CD14-positive monocyte (primary cell): ENCODE measurements at regions of chr13 and their contacts with region 1.

Region 1: DNA sequence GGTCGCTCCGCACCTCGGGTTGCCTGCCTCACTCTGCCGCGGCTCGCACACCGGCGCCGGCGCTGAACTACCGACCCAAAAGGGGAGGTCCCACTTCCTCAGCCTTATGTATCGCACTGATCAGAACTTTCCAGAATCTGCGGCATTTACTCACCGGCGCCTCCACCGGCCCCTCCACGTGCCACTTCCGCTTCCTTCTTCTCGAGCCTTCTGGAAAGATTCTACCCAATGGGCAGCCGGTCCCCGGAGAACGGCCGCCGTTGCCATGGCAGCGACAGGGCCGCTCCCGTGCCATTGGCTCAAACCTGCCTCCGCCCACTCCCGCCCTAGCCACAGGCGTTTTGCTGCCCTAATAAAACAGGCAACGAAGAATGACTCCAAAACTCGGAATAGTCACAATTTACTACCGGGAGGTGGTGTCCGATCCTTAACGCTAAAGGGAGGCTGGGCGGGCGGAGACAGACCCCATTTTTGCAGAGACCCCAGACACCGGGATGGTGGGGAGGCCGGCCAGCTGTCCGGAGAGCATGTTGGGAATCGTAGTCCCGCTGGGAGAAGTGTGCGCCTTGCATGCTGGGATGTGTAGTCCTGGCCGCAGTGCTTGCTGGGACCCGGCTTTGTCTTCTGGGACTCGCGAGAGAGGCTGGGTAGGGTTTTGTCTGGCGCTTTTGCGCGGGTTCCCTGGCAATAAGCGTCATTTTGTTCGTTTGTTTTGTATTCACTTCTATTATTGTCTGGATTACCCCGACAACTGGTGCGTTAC is at the start of gene HSPH1:
- DNase-seq: peak; percentile 97 to 99 (median 98)
- H3K4me3 ChIP-seq: peak within 1 kb of the TSS; percentile 72 to 98 (median 90)
- H3K4me3 Mint-ChIP-seq: peak within 1 kb of the TSS; percentile 96 to 97
- H3K27ac ChIP-seq: peak within 1 kb of the TSS; percentile 85 to 92
- H3K27ac Mint-ChIP-seq: peak within 1 kb of the TSS; percentile 81 to 94 (median 92)
- H3K4me1 ChIP-seq: peaks cover 15 to 30% of the 10 kb centered on the region in 2 donors
- H3K4me1 Mint-ChIP-seq: peaks cover 24% of the 10 kb centered on the region
- H3K27me3 ChIP-seq: no peaks in the 10 kb centered on the region
- H3K27me3 Mint-ChIP-seq: peaks cover 0 to 5% (median 0%) of the 10 kb centered on the region in 3 donors
- CTCF ChIP-seq: no peak
- polyA plus RNA-seq, gene HSPH1: 7.4 to 11.3 (median 9.1) TPM

Region 2: DNA sequence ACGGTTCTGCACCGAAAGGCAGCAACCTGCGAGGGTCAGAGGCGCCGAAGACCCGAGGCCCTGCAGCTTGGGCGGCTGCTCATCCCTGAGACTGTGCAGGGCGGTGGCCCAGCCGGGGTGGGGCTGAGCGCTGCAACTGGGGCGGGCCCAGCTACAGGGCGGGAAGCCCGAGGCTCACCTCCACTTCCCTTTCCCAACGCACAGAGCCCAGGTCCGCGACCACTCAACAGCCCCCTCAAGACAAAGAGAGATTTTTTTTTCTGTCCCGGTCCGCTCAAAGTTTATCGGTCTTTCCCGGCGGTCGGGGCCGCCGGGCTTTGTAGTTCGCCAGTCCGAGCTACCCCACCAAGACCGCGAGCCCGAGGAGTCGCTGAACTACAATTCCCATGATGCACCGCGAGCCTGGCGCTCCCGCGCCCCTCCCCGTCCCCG is 855.2 kb before region 1 on chr13:
- intact Hi-C with region 1: loop called in 1 of 2 experiments (anchors 10 kb)
- DNase-seq: peak; percentile 84 to 90 (median 86)
- H3K4me3 ChIP-seq: peak overlapping the region; percentile 73 to 97 (median 84)
- H3K4me3 Mint-ChIP-seq: peak overlapping the region; percentile 83 to 90
- H3K27ac ChIP-seq: peak overlapping the region in 1 of 2 donors; percentile 79
- H3K27ac Mint-ChIP-seq: peak overlapping the region in 6 of 7 donors; percentile 33 to 81 (median 68)
- H3K4me1 ChIP-seq: peaks cover 18 to 24% of the 10 kb centered on the region in 2 donors
- H3K4me1 Mint-ChIP-seq: peaks cover 36% of the 10 kb centered on the region
- H3K27me3 ChIP-seq: no peaks in the 10 kb centered on the region
- H3K27me3 Mint-ChIP-seq: peaks cover 0 to 2% (median 0%) of the 10 kb centered on the region in 3 donors
- CTCF ChIP-seq: no peak

Region 3: DNA sequence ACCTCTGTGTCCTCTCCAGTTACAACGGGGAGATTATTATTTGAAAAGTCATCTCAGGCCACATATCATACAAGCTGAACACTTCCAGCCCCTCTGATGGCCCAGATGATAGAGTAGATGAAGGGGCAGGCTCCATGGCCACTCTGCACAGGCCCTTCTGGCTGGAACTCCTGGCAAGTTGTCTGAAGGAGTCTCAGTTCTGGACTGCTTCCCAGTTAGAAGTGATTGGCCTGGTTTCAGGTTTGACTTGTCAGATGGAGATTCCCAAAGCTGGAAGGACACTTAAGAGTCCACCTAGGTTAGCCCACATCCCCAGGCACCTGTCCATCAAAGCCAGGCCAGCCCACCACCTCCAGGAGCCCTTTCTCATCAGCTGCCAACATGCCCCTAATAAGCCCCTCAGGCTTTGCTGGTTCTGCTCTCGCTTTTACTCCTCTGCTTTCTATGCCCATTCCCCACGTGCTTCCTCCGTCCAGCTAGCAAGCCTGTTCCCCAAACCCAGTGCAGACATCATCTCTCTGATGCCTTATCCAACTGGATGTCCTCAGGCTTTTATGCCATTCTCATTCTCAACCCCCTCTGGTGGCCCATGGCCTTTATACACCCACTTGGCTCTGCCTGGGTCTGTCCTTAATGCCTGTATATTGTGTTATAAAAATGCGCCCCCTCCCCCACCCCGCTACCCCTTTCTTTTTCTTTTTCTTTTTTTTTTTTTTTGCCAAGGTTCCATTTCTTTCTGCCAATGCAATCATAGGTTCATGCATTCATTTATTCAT is 56.8 kb before region 1 on chr13:
- intact Hi-C with region 1: no loop called
- DNase-seq: no peak
- H3K4me3 ChIP-seq: no peak overlapping the region
- H3K4me3 Mint-ChIP-seq: no peak overlapping the region
- H3K27ac ChIP-seq: no peak overlapping the region
- H3K27ac Mint-ChIP-seq: no peak overlapping the region
- H3K4me1 ChIP-seq: no peaks in the 10 kb centered on the region
- H3K4me1 Mint-ChIP-seq: no peaks in the 10 kb centered on the region
- H3K27me3 ChIP-seq: no peaks in the 10 kb centered on the region
- H3K27me3 Mint-ChIP-seq: peaks cover 9 to 13% (median 11%) of the 10 kb centered on the region in 3 donors
- CTCF ChIP-seq: no peak

Region 4: DNA sequence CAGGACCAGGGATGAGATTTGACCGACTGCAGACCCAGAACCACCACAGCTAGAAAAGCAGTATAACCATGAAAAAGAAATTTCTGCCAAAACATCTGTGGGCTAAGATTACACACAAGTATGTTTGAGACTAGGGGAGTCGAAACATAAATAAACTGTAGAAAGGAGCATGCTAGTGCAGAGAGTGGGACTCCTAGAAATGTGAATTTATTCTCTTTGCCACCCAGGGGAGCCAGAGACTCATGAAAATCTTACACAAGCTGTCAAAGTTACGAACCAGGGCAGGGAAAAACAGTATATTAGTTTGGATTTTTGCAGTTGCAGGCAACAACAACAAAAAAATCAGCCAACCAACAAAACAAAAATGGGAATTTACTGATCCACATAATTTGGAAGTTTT is 12.0 kb after region 1 on chr13:
- intact Hi-C with region 1: no loop called
- DNase-seq: no peak
- H3K4me3 ChIP-seq: no peak overlapping the region
- H3K4me3 Mint-ChIP-seq: no peak overlapping the region
- H3K27ac ChIP-seq: no peak overlapping the region
- H3K27ac Mint-ChIP-seq: no peak overlapping the region
- H3K4me1 ChIP-seq: no peaks in the 10 kb centered on the region
- H3K4me1 Mint-ChIP-seq: no peaks in the 10 kb centered on the region
- H3K27me3 ChIP-seq: no peaks in the 10 kb centered on the region
- H3K27me3 Mint-ChIP-seq: peaks cover 0 to 5% (median 1%) of the 10 kb centered on the region in 3 donors
- CTCF ChIP-seq: no peak

Region 5: GRCh38 chr13:31209172-31209840 is 47.3 kb after region 1 on chr13:
- intact Hi-C with region 1: no loop called
- DNase-seq: no peak
- H3K4me3 ChIP-seq: no peak overlapping the region
- H3K4me3 Mint-ChIP-seq: peak overlapping the region in 1 of 2 donors; percentile 66
- H3K27ac ChIP-seq: no peak overlapping the region
- H3K27ac Mint-ChIP-seq: no peak overlapping the region
- H3K4me1 ChIP-seq: peaks cover 3 to 4% of the 10 kb centered on the region in 2 donors
- H3K4me1 Mint-ChIP-seq: peaks cover 19% of the 10 kb centered on the region
- H3K27me3 ChIP-seq: no peaks in the 10 kb centered on the region
- H3K27me3 Mint-ChIP-seq: peaks cover 0 to 5% (median 0%) of the 10 kb centered on the region in 3 donors
- CTCF ChIP-seq: no peak